Activated CD4-positive, alpha-beta T cell treated with anti-CD3 and anti-CD28 coated beads for 36 hours (primary cell): ENCODE measurements at regions of chr4 and their contacts with region 1.

Region 1: GRCh38 chr4:106266201-106266600 is 49.8 kb downstream of the TBCK start:
- DNase-seq: no peak
- ATAC-seq: no peak
- H3K4me3 Mint-ChIP-seq: no peak overlapping the region
- H3K27ac Mint-ChIP-seq: no peak overlapping the region
- H3K4me1 Mint-ChIP-seq: peaks cover 2% of the 10 kb centered on the region
- H3K27me3 Mint-ChIP-seq: no peaks in the 10 kb centered on the region

Region 2: GRCh38 chr4:104465201-104465600 is 1801.0 kb before region 1 on chr4:
- CTCF ChIA-PET with region 1: no interaction called
- POLR2A ChIA-PET with region 1: no interaction called
- intact Hi-C with region 1: no loop called
- DNase-seq: no peak
- ATAC-seq: no peak
- H3K4me3 Mint-ChIP-seq: no peak overlapping the region
- H3K27ac Mint-ChIP-seq: no peak overlapping the region
- H3K4me1 Mint-ChIP-seq: no peaks in the 10 kb centered on the region
- H3K27me3 Mint-ChIP-seq: no peaks in the 10 kb centered on the region

Region 3: GRCh38 chr4:106502106-106502699 is 236.0 kb after region 1 on chr4:
- CTCF ChIA-PET with region 1: interaction called, 20 read pairs
- POLR2A ChIA-PET with region 1: no interaction called
- intact Hi-C with region 1: loop called (anchors 1 to 5 kb)
- DNase-seq: peak; percentile 70
- ATAC-seq: peak; percentile 58
- H3K4me3 Mint-ChIP-seq: no peak overlapping the region
- H3K27ac Mint-ChIP-seq: no peak overlapping the region
- H3K4me1 Mint-ChIP-seq: no peaks in the 10 kb centered on the region
- H3K27me3 Mint-ChIP-seq: peaks cover 23% of the 10 kb centered on the region

Region 4: DNA sequence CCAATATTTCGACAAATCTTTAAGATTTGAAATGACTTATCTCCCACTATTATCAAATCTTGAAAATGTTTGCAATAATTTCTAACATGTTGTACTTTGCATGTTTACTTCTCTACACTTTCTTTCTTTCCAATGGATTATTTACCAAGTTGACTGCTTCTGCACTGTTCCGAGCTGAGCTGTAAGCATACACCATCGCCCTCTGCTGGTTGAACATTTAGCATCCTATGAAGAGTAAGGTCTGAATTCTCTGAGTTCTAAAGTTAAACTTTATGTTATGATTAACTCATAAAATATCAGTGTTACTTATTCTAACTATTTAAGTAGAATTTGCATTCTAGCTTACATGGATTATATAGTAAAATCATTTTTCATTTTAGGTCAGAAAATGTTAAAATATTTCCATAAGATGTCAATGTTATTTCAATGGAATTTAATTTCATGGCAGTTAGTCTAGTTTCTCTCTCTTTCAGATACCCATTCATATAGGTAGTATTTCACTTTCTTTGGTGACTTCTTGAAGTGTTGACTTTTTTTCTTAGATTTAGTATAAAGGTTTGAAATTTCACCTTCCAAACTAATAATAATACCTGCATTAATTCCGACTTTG is 632.5 kb after region 1 on chr4:
- CTCF ChIA-PET with region 1: interaction called, 6 read pairs
- POLR2A ChIA-PET with region 1: no interaction called
- intact Hi-C with region 1: loop called in 1 of 2 experiments (anchors 5 kb)
- DNase-seq: peak; percentile 50
- ATAC-seq: no peak
- H3K4me3 Mint-ChIP-seq: no peak overlapping the region
- H3K27ac Mint-ChIP-seq: no peak overlapping the region
- H3K4me1 Mint-ChIP-seq: no peaks in the 10 kb centered on the region
- H3K27me3 Mint-ChIP-seq: peaks cover 2% of the 10 kb centered on the region